Aorta (tissue), 5 donors: ENCODE measurements at regions of chr1 and their contacts with region 1.

Region 1: GRCh38 chr1:15323351-15323988 is 76.4 kb downstream of the FHAD1 start:
- DNase-seq: peak; percentile 85 to 89
- ATAC-seq: peak; percentile 91
- H3K4me3 ChIP-seq: no peak overlapping the region
- H3K27ac ChIP-seq: no peak overlapping the region
- H3K4me1 ChIP-seq: no peaks in the 10 kb centered on the region
- H3K27me3 ChIP-seq: no peaks in the 10 kb centered on the region

Region 2: GRCh38 chr1:15430787-15431570 is 107.5 kb after region 1 on chr1:
- intact Hi-C with region 1: loop called (anchors 1 kb)
- DNase-seq: peak; percentile 74 to 91
- ATAC-seq: peak; percentile 84
- H3K4me3 ChIP-seq: no peak overlapping the region
- H3K27ac ChIP-seq: no peak overlapping the region
- H3K4me1 ChIP-seq: no peaks in the 10 kb centered on the region
- H3K27me3 ChIP-seq: no peaks in the 10 kb centered on the region

Region 3: DNA sequence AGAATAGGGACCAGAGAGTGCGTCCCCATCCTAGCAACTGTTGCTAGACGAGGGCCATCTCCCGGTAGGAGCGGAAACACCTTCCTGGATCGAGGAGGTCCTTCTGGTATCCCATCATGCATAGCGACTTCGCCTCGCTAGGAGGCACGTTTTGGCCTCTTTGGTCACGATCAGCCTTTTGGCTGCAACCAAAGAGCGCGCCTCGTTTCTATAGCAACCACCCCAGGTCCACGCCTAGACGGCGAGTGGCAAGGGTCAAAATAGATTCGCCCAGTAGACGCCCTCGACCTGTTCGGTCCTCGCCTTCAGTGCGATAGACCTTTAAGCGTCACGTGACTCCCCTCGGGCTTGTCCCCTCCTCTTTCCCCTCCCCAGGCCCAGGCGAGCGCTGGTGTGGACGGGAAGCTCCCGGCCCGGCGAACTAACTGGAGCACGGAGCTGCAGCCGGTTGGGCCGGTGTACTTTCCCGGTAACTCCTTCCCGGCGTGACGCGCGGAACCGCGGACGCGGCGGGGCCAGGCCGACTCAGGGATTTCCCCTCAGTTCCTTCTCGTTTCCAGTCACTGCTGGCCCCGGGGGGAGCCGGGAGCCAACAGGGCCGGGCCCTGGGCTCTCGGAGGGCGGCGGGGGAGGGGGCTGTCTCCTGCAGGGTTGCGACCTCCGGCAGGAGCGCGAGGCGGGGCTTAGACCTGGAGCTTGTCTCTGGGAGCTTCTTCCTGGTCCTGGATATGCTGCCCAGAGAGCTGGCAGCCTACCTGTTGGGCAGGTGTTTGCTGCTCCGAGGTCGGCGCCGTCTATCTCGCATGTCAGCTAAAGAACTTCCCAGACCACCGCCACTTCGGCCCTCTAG is 203.2 kb after region 1 on chr1 and contains the start of gene DNAJC16:
- intact Hi-C with region 1: loop called (anchors 10 kb)
- DNase-seq: peak; percentile 98 to 99
- ATAC-seq: peak; percentile 83
- H3K4me3 ChIP-seq: peak within 1 kb of the TSS; percentile 40 to 80
- H3K27ac ChIP-seq: peak within 1 kb of the TSS in 1 of 2 donors; percentile 74
- H3K4me1 ChIP-seq: no peaks in the 10 kb centered on the region
- H3K27me3 ChIP-seq: no peaks in the 10 kb centered on the region
- total RNA-seq, gene DNAJC16: 18.0 to 19.9 TPM